Transverse colon (tissue), 4 donors: ENCODE measurements at regions of chr17 and their contacts with region 1.

Region 1: GRCh38 chr17:13562271-13562800 is 39.4 kb downstream of the HS3ST3A1 start:
- DNase-seq: no peak
- H3K4me3 ChIP-seq: no peak overlapping the region
- H3K27ac ChIP-seq: no peak overlapping the region
- H3K4me1 ChIP-seq: no peaks in the 10 kb centered on the region
- H3K27me3 ChIP-seq: no peaks in the 10 kb centered on the region
- CTCF ChIP-seq: no peak
- EP300 ChIP-seq: no peak
- POLR2A ChIP-seq: no peak

Region 2: GRCh38 chr17:13462146-13462545 is 100.2 kb before region 1 on chr17:
- in situ Hi-C with region 1: loop called in 1 of 4 experiments (anchors 25 kb)
- intact Hi-C with region 1: no loop called
- DNase-seq: no peak
- H3K4me3 ChIP-seq: no peak overlapping the region
- H3K27ac ChIP-seq: no peak overlapping the region
- H3K4me1 ChIP-seq: no peaks in the 10 kb centered on the region
- H3K27me3 ChIP-seq: no peaks in the 10 kb centered on the region
- CTCF ChIP-seq: no peak
- EP300 ChIP-seq: no peak
- POLR2A ChIP-seq: no peak

Region 3: GRCh38 chr17:13619462-13619861 is 57.1 kb after region 1 on chr17:
- in situ Hi-C with region 1: no loop called
- intact Hi-C with region 1: no loop called
- DNase-seq: no peak
- H3K4me3 ChIP-seq: no peak overlapping the region
- H3K27ac ChIP-seq: no peak overlapping the region
- H3K4me1 ChIP-seq: no peaks in the 10 kb centered on the region
- H3K27me3 ChIP-seq: no peaks in the 10 kb centered on the region
- CTCF ChIP-seq: no peak
- EP300 ChIP-seq: no peak
- POLR2A ChIP-seq: no peak

Region 4: GRCh38 chr17:13671771-13672170 is 109.4 kb after region 1 on chr17:
- in situ Hi-C with region 1: loop called in 1 of 4 experiments (anchors 25 kb)
- intact Hi-C with region 1: no loop called
- DNase-seq: no peak
- H3K4me3 ChIP-seq: no peak overlapping the region
- H3K27ac ChIP-seq: no peak overlapping the region
- H3K4me1 ChIP-seq: no peaks in the 10 kb centered on the region
- H3K27me3 ChIP-seq: no peaks in the 10 kb centered on the region
- CTCF ChIP-seq: no peak
- EP300 ChIP-seq: no peak
- POLR2A ChIP-seq: no peak